A673 (cell line): ENCODE measurements at regions of chr9 and their contacts with region 1.

Region 1: GRCh38 chr9:36924071-36924470 is 110.0 kb downstream of the PAX5 start:
- DNase-seq: peak; percentile 89
- H3K4me3 ChIP-seq: no peak overlapping the region
- H3K27ac ChIP-seq: no peak overlapping the region
- H3K4me1 ChIP-seq: peaks cover 36% of the 10 kb centered on the region
- H3K27me3 ChIP-seq: no peaks in the 10 kb centered on the region
- CTCF ChIP-seq: no peak

Region 2: DNA sequence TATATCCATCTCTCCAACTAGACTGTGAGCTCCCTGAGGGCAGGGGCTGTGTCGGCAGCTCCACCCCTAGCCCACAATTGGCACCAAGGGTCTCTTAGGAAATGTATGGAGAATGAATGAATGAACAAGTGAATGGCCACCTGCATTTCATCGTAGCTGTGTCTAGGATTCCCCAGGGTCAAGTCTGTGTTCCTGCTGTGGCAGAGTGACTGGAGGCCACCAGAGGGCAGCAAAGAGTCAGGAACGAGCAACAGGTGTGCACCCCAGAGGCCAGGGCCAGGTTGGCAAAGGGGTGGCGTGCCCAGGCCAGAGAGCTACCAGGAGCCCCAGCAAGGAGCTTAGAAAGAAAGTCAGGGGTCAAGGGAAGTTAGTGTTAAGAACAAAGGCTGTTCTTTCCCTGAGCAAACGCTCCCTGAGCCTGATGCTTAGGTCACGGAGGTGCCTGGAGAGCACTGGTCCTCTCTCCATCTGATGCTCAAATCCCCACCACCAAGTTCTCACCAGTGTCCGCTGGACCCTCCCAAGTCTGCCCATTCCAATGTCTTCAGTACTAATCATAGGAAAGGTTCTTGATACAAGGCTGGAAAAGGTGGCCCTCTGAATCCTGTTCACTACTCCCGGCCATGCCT is 50.7 kb before region 1 on chr9:
- CTCF ChIA-PET with region 1: no interaction called
- POLR2A ChIA-PET with region 1: no interaction called
- intact Hi-C with region 1: loop called (anchors 5 kb)
- DNase-seq: peak; percentile 72
- H3K4me3 ChIP-seq: no peak overlapping the region
- H3K27ac ChIP-seq: no peak overlapping the region
- H3K4me1 ChIP-seq: no peaks in the 10 kb centered on the region
- H3K27me3 ChIP-seq: no peaks in the 10 kb centered on the region
- CTCF ChIP-seq: peak; percentile 95

Region 3: DNA sequence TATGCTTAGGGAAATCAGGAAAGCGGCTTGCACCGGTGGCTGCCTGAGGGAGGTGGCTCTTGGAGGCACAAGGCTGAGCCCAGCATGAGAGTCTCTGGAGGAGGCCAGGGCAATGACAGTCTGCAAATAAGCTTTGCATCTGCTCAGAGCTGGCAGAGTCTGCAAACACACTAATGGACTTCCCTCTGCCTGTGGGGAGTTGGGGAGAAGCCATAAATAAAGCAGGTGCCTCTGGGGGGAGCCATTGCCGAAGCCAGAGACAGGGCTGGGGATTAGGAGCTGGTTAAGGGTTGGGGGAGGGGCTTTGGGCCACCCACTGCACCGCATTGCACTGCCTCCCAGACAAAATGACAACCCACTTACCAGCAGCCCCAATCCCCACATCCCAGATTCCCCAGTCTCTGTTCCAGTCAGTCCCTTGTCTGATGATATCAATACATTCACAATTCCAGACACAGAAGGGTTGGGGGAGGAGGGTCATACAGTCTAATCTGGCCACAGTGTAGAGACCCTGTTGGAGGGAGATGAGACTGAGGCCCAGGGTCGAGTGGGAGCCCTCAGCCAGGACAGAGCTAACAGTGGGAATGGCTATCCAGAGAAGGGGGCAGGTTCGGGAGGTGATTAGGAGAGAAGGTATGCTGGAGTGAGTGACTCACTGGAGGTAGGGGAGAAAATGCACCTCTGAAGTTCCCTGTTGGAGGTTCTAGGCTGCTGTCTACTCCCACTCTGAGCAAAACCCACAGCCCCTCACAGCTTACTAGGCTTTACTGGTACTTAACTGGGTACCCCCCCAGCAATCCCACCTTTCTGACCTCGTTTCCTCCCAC is 56.3 kb after region 1 on chr9:
- CTCF ChIA-PET with region 1: no interaction called
- POLR2A ChIA-PET with region 1: no interaction called
- intact Hi-C with region 1: loop called (anchors 5 kb)
- DNase-seq: peak; percentile 91
- H3K4me3 ChIP-seq: no peak overlapping the region
- H3K27ac ChIP-seq: no peak overlapping the region
- H3K4me1 ChIP-seq: peaks cover 16% of the 10 kb centered on the region
- H3K27me3 ChIP-seq: no peaks in the 10 kb centered on the region
- CTCF ChIP-seq: peak; percentile 69

Region 4: DNA sequence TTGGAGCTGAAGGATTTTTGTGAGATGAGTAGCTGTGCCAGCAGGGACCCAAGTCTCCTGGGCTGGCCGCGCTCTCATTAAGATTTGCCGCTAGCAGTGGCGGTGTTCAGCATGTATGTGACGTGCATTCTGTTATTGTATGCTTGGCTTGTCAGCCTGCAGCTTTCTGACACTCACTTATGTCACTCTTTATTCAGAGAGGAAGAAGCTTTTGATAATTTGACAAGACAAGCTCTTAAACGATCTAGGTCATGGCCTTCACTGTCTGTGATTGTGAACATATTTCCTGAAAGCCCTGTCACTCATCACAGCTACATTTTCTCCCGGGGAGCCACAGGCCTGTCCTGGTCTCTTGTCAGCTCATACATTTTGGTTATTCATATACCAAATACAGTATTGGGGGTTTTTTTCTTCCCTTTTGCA is 400.2 kb after region 1 on chr9:
- CTCF ChIA-PET with region 1: no interaction called
- POLR2A ChIA-PET with region 1: interaction called, 11 read pairs
- intact Hi-C with region 1: no loop called
- DNase-seq: peak; percentile 96
- H3K4me3 ChIP-seq: peak overlapping the region; percentile 5
- H3K27ac ChIP-seq: peak overlapping the region; percentile 66
- H3K4me1 ChIP-seq: peaks cover 63% of the 10 kb centered on the region
- H3K27me3 ChIP-seq: no peaks in the 10 kb centered on the region
- CTCF ChIP-seq: no peak